ENCODE measurements at regions of chr9 and their contacts with region 1.

Region 1: GRCh38 chr9:114155263-114155972 is at the start of gene COL27A1:
- DNase-seq: peak; percentile 63 to 90 (median 74)
- H3K4me3 ChIP-seq: peak within 1 kb of the TSS; percentile 36 to 79 (median 62)
- H3K27ac ChIP-seq: peak within 1 kb of the TSS in 25 of 59 donors; percentile 3 to 70 (median 37)
- H3K27me3 ChIP-seq: peaks cover 0 to 40% (median 23%) of the 10 kb centered on the region in 45 donors
- CTCF ChIP-seq: peak; percentile 62 to 98 (median 92)
- total RNA-seq, gene COL27A1: 2.5 to 32.9 (median 9.7) TPM

Region 2: DNA sequence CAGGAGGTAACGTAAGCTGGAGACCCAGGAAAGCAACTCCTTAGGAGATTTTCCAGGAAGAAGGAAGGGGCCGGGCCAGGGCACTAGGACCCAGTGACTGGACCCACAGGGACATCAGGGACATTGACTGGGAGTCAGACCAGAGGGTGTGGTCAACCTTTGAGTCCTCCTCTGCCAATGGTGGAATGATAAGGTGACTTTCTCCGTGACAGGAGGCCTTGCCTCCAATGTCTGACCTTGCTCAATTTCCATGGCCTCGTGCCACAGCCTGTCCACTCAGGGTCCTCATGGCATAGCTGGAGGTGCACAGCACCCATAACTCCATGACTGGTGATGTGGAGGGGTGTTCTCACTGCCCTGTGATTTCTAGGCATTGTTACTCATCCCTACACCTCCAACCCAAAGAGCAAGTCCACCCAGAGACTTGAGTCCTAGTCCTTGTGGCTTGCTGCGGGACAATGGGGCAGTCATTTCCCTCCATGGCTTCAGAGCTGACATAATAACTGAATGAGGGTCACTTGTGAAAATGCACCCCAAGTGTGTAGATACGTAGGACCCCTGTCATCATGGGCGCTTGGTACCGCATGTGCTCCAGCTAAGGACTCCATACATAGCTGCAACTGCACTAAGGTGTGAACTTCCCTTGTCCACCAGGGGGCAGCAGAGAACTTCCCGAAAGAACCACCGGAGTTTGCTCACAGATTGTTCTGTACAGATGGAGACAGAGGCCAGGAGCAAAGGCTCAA is 73.2 kb before region 1 on chr9:
- intact Hi-C with region 1: no loop called
- DNase-seq: peak; percentile 81 to 97 (median 90)
- H3K4me3 ChIP-seq: no peak overlapping the region
- H3K27ac ChIP-seq: no peak overlapping the region
- H3K27me3 ChIP-seq: peaks cover 0 to 21% (median under 1%) of the 10 kb centered on the region in 45 donors
- CTCF ChIP-seq: peak; percentile 81 to 99 (median 95)

Region 3: DNA sequence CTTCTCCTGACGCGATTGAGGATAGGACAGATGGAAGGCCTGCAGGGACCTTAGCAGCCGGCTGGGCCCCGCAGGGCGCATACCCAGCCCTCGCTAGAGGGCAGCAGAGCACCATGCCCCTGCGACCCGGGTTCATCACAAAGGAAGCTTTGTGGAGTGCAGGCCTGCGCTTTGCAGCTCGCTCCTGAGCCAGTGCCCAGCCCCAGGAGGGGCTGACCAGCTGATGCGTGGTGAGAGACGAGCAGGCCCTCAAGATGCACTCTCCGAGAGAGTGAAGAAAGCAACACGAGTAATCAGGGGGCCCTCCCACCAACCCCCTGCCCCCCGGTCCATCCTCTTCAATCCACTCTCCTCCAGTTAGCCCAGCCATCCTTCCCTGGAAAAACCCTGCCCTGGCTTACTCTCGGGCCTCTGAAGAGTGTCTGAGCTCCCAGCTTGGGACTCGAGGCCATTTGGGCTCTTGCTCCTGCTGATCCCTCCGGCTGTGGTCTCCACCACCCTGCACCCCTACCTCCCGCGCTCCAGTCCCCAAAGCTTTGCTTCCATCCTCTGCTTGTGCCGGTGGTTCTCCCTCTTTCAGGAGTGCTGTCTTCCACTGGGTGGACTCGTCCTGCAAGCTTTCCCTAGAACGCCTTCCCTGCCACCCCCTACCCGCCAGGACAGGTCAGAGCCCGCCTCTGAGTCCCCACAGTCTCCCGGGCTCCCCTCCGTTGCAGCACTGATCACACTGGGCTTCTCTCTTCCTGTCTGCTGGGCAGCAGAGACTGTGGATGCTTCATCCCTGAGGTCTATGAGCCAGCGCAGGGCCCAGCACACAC is 47.2 kb before region 1 on chr9:
- intact Hi-C with region 1: loop called in 1 of 2 experiments (anchors 5 kb)
- DNase-seq: peak; percentile 48 to 83 (median 74)
- H3K4me3 ChIP-seq: no peak overlapping the region
- H3K27ac ChIP-seq: no peak overlapping the region
- H3K27me3 ChIP-seq: peaks cover 0 to 3% (median 0%) of the 10 kb centered on the region in 45 donors
- CTCF ChIP-seq: peak; percentile 53 to 96 (median 86)

Region 4: DNA sequence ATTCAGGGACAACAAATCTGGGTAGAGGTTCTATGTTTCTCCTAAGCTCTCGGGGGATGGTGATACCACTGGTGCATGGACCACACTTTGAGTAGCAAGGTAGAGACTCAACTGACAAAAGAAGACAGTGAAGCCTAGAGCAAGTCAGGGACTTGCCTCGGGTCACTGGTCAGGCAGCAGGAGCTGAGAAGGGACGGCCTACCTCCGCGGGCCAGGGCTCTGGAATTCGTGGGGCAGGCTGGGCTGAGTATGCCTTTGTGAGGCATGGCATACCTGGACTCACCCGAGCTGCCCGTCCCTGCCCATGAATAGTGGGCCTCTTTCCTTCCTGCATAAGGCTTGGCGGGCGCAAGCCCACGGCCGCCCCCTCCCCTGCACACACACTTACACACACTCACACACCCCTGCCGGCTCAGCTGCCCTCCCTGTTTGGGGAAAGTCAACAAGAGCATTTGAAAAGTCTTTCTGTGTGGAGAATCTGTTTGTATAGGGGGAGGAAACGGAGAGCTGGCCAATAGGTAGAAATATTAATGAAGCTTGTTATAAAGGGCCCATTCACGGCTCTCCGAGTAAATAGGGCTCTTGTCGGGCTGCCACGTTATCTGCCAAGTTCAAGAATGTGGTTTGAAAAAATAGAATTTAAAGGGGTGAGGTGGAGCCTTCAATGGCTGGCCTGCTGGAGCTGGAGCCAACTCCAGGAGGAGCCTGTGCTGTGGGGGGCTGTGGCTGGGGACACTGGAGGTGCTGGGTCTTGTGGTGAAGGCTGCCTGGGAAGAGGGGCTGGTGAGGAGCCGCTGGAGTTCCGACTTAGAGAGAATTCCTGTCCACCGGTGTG is 37.2 kb before region 1 on chr9:
- intact Hi-C with region 1: loop called in 1 of 2 experiments (anchors 5 kb)
- DNase-seq: peak in 3 of 10 donors; percentile 2 to 39 (median 38)
- H3K4me3 ChIP-seq: peak overlapping the region in 6 of 59 donors; percentile 2 to 33 (median 15)
- H3K27ac ChIP-seq: no peak overlapping the region
- H3K27me3 ChIP-seq: peaks cover 0 to 26% (median 0%) of the 10 kb centered on the region in 45 donors
- CTCF ChIP-seq: no peak

Region 5: DNA sequence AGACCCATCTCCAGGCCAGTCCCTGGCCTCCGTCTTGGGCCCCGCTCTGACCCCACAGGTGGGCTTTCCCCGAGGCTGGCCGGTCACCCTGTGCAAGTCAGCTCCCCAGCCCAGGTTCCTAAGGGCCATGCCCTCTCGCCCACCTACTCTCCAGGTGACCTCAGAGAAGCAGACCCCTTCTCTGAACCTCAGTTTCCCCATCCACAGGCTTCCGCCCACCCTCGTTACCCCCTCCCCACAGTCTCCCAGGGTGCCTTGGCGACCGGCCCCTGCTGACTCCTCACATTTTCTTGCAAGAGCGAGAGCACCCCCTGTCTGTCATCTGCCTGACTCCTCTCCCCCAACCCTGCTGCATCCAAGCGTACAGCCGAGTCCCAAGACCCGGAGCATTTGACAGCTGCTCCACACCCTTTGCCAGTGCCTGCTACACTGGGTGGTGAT is 116.2 kb after region 1 on chr9:
- intact Hi-C with region 1: loop called (anchors 1 to 5 kb)
- DNase-seq: peak in 4 of 10 donors; percentile 40 to 59 (median 56)
- H3K4me3 ChIP-seq: no peak overlapping the region
- H3K27ac ChIP-seq: no peak overlapping the region
- H3K27me3 ChIP-seq: no peaks in the 10 kb centered on the region
- CTCF ChIP-seq: peak in 54 of 56 donors; percentile 20 to 72 (median 54)

Region 6: DNA sequence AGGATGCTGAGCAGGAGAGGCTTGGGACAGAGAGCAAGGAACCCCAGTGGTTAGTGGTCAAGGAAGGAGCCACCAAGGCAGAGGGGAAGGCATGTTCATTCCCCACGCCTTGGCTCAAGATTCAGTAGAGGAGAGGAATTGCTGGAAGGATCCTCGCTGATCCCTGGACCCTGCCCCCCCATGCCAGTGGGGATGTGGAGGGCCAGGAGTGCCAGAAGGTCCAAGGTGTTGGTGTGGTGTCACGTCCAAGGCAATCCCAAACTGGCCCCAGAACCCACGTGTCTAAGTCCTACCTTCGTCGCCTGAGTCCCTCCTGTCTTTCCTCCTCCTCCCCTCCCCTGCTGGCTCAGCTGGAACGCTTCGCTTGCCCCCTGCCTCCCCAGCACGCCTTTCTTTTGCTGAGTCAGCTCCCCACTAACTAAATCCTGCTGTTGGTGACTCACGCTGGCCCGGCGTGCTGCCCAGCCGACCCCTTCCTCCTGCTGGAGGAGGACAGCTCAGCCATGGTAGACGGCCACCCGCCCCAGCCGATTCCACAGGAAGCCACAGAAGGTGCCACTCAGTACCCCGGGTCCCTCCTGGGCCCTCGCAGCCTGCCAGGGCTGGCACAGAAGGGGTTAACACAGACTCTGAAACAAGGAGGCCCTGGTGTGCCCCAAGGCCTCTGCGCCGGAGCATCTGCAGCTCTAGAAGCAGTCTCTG is 129.9 kb after region 1 on chr9:
- intact Hi-C with region 1: loop called (anchors 2 to 5 kb)
- DNase-seq: peak in 6 of 10 donors; percentile 8 to 35 (median 30)
- H3K4me3 ChIP-seq: no peak overlapping the region
- H3K27ac ChIP-seq: no peak overlapping the region
- H3K27me3 ChIP-seq: no peaks in the 10 kb centered on the region
- CTCF ChIP-seq: no peak

Region 7: GRCh38 chr9:114291064-114291474 is 135.7 kb after region 1 on chr9:
- intact Hi-C with region 1: loop called (anchors 2 to 5 kb)
- DNase-seq: peak; percentile 65 to 84 (median 80)
- H3K4me3 ChIP-seq: no peak overlapping the region
- H3K27ac ChIP-seq: no peak overlapping the region
- H3K27me3 ChIP-seq: no peaks in the 10 kb centered on the region
- CTCF ChIP-seq: peak; percentile 86 to 99 (median 97)

Measured in dorsolateral prefrontal cortex (tissue), 120 donors.